Aorta (tissue), 5 donors: ENCODE measurements at regions of chr20 and their contacts with region 1.

Region 1: DNA sequence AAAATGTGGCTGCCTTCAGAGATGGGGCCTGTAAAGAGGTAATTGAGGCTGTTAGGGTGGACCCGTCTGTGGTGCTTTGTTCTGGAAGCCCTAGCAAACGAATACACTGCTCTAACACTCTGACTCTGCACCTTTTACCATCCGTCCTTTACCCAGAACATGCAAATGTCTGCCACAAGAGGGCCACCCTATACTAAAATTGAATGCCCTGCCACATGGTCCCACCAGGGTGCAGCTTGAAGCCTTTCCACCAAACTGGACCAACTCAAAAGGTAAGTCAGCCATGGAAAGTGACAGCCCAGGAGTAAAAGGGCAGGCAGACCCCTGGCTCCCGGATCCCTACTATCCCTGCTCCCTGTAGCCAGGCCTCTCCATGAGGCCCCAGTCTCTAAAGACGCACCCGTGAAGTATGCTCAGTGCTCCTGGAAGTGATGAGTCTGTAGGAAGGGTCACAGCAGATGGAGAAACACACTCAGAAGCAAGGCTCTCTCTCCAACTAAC is 5.8 kb upstream of the BFSP1 start:
- DNase-seq: peak; percentile 68 to 80
- ATAC-seq: peak; percentile 94
- H3K4me3 ChIP-seq: no peak overlapping the region
- H3K27ac ChIP-seq: peak overlapping the region in 1 of 2 donors; percentile 32
- H3K4me1 ChIP-seq: peaks cover 0 to 6% of the 10 kb centered on the region in 2 donors
- H3K27me3 ChIP-seq: no peaks in the 10 kb centered on the region

Region 2: DNA sequence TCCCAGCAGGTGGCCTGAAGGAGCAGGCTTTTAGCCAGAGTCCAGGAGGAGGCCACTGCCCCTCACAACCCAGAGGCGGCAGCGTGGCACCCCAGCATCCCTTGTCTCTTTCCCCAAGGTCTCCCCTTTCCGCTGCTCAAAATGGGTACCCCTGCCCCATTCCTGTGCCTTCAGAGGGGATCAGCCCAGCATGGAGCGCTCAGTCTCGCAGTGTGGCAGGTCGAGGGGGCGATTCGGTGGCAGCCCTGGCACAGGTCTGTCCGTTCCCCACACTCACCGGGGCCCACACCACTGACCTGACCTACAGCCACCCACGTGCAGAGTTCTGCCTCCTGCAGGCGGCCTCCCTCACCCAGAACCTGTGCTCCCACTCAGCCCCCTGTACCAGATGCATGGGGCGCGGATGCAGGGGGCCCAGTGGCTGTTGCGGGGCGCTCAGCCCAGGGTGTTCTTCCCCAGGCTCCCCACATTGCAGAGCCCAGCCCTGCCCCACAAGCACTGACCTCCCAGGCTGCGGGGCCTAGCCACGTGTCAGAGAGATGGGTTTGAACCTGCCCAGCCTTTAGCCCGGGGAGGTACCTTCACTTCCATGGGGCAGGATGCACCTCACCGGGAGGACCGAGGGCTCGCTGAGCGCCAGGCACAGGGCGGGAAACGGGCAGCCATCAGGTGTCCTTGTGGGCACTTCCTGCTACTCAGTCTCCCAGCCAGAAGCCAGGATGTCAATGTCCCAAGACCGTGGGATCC is 74.7 kb after region 1 on chr20:
- intact Hi-C with region 1: loop called in 1 of 2 experiments (anchors 2 kb)
- DNase-seq: peak; percentile 58 to 78
- ATAC-seq: peak; percentile 13
- H3K4me3 ChIP-seq: no peak overlapping the region
- H3K27ac ChIP-seq: peak overlapping the region; percentile 0 to 14
- H3K4me1 ChIP-seq: no peaks in the 10 kb centered on the region
- H3K27me3 ChIP-seq: no peaks in the 10 kb centered on the region

Region 3: GRCh38 chr20:17617551-17618223 is 80.7 kb after region 1 on chr20:
- intact Hi-C with region 1: loop called in 1 of 2 experiments (anchors 1 kb)
- DNase-seq: peak; percentile 67 to 87
- ATAC-seq: peak; percentile 65
- H3K4me3 ChIP-seq: no peak overlapping the region
- H3K27ac ChIP-seq: no peak overlapping the region
- H3K4me1 ChIP-seq: no peaks in the 10 kb centered on the region
- H3K27me3 ChIP-seq: no peaks in the 10 kb centered on the region